ENCODE measurements at regions of chr9 and their contacts with region 1.

Region 1: GRCh38 chr9:121498150-121498486 is 1.5 kb downstream of the GGTA1 start:
- DNase-seq: peak; percentile 18 to 50
- ATAC-seq: peak; percentile 83
- H3K4me3 ChIP-seq: peak overlapping the region; percentile 53 to 69 (median 58)
- H3K27ac ChIP-seq: peak overlapping the region in 1 of 4 donors; percentile 77
- H3K4me1 ChIP-seq: peaks cover 9 to 20% of the 10 kb centered on the region in 2 donors
- H3K27me3 ChIP-seq: peaks cover 11 to 26% (median 24%) of the 10 kb centered on the region in 3 donors
- CTCF ChIP-seq: peak; percentile 37 to 60 (median 54)
- POLR2A ChIP-seq: no peak

Region 2: DNA sequence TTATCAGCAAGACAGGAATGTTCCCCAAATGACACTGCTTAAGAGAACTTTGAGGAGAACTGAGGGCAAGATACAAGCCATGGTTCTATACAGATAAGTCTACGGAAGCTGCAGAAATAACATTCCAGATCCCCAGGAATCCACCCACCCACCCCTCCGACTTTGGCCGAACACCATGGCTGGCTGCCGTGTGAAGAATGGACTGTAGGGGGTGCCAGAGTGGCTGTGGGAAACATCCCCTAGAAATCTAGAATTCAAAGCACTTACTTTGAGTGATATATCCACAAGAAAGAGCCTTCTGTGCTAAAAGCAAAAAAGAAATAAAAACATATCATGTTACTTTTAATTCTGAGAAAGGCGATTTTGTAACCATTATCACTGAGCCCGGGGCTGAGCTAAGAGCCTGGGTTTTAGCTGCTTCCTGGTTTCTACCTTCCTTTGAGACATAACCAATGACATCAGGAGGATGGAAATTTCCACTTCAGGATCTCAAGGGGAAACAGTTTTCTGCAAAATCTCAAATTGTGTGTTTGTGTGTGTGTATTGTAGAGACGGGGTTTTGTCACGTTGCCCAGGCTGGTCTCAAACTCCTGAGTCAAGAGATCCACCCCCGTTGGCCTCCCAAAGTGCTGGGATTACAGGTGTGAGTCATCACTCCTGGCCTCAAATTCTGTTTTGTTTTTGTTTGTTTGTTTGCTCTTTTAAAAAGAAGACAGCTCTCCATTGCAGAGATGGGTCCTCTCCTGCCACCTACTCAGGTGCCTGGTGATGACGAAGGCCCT is 34.9 kb before region 1 on chr9:
- in situ Hi-C with region 1: no loop called
- intact Hi-C with region 1: loop called (anchors 2 kb)
- DNase-seq: no peak
- ATAC-seq: peak in 1 of 2 donors; percentile 53
- H3K4me3 ChIP-seq: no peak overlapping the region
- H3K27ac ChIP-seq: no peak overlapping the region
- H3K4me1 ChIP-seq: peaks cover 0 to 3% of the 10 kb centered on the region in 2 donors
- H3K27me3 ChIP-seq: peaks cover 0 to 4% (median 0%) of the 10 kb centered on the region in 3 donors
- CTCF ChIP-seq: peak in 3 of 5 experiments; percentile 36 to 73 (median 65)
- POLR2A ChIP-seq: no peak

Measured in gastrocnemius medialis (tissue), 4 donors.